Activated CD4-positive, alpha-beta T cell treated with anti-CD3 and anti-CD28 coated beads, Interleukin-2, amount 10 ng/mL, durations not matched to agents 24 days and 14 days (primary cell): ENCODE measurements at regions of chr3 and their contacts with region 1.

Region 1: DNA sequence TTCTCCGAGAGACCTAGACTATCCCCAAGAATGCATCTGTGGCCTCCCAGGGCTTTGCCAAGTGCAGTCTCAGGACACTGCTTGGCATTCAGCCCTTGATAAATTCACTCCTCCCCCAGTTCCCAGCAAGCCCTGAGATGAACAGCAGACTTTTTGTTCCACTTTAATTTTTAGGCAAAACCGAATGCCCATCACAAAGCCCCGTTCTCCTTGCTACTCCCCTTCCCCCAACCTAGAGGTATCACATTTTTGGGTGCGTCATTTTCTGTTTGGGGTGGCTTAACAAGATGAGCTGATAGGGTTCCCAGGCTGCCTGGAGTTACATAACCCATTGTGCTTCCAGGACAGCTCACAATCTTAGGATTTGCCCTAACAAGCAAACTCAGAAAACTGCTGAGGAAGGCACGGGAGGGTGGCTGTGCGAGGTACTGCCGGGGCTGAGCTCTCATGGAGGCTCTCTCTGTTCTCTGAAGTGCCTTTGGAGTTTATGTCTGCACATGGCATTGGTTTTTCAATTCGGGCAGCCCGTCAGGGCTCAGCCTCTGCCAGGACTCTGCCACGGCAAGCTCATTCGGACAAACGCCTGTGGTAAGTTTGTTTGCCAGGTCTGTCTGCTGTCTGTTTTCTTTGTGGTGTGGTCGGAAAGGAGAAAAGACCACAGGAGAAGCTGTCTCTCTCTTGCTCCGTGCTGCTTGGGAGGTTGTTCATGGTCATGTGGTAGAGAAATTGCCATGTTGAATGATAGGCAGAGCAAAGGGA is at the start of gene TRAK1:
- DNase-seq: no peak
- H3K4me3 Mint-ChIP-seq: peak within 1 kb of the TSS; percentile 43
- H3K27ac Mint-ChIP-seq: peak within 1 kb of the TSS; percentile 74
- H3K4me1 Mint-ChIP-seq: peaks cover 37% of the 10 kb centered on the region
- H3K27me3 Mint-ChIP-seq: no peaks in the 10 kb centered on the region
- total RNA-seq, gene TRAK1: 35.4 and 35.9 TPM in 2 replicates

Region 2: GRCh38 chr3:40971191-40972168 is 1119.7 kb before region 1 on chr3:
- intact Hi-C with region 1: loop called (anchors 10 kb)
- DNase-seq: peak; percentile 77
- H3K4me3 Mint-ChIP-seq: peak overlapping the region; percentile 77
- H3K27ac Mint-ChIP-seq: peak overlapping the region; percentile 98
- H3K4me1 Mint-ChIP-seq: peaks cover 53% of the 10 kb centered on the region
- H3K27me3 Mint-ChIP-seq: no peaks in the 10 kb centered on the region

Region 3: DNA sequence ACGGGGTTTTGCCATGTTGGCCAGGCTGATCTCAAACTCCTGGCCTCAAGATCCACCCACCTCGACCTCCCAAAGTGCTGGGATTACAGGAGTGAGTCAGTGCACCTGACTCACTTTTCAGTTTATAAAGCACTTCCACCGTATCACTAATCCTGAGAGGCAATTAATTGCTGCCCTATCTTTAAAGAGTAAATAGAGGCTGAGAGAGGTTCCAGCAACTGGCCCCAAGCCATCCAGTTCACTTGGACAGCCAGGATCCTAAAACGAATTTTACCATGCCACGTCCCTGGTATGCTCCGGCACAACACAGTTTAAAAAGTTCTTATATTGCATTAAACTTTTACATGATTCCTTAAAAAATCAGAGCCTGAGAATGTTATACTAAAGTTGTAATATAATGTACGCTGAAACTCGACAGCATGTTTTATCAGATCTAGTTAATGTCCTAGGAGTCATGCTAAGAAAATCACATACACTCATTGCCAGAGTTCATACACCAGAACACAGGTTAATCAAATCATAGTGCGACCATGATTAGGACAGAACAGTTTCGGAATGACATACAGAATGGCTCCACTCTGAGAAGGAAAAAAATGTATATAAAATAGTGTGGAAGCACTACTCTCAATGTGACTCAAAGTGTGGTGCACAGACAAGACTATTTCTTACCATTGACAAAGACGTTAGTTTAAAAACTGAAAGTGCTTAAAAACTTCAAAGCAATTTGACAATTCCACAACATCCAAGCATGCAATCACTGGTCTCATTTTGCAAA is 254.6 kb before region 1 on chr3:
- intact Hi-C with region 1: loop called (anchors 5 kb)
- DNase-seq: no peak
- H3K4me3 Mint-ChIP-seq: no peak overlapping the region
- H3K27ac Mint-ChIP-seq: no peak overlapping the region
- H3K4me1 Mint-ChIP-seq: peaks cover 4% of the 10 kb centered on the region
- H3K27me3 Mint-ChIP-seq: no peaks in the 10 kb centered on the region

Region 4: DNA sequence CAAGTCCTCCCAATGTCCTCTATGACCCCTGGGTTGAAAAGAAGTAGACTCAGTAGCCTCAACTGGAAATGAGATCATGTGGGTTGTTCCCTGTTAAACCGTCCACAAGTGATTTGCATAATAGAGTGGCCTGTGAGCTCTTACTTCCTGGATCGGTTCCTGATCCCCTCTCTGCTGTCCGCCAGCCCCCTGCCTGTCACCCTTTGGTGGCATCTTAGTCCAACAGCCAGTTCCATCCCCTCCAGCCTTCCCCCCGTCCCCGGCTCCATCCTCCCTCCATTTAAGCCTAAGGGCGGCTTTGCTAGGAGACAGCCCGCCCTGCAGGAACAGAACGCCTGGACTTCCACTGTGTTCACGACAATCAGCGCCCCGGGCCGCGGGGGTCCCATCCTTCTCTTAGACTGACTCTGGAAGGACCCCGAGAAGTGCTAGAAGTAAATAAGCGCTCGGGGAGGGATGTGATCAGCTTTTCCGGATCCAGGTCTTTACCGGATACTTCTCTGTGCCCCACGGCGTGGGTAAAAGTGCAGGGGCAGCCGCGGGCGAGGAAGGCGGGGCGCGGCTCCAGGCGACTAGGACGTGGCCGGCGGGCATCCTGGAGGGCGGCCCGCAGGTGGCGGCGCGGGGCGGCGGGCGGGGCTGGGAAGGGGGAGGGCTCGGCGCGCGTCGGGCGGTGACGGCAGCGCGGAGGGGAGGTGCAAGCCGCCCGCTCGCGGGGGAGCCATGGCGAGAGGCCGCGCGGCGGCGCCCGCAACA is 78.0 kb before region 1 on chr3:
- intact Hi-C with region 1: loop called (anchors 2 kb)
- DNase-seq: peak; percentile 91
- H3K4me3 Mint-ChIP-seq: peak overlapping the region; percentile 84
- H3K27ac Mint-ChIP-seq: peak overlapping the region; percentile 93
- H3K4me1 Mint-ChIP-seq: peaks cover 38% of the 10 kb centered on the region
- H3K27me3 Mint-ChIP-seq: no peaks in the 10 kb centered on the region